ENCODE measurements at regions of chr1 and their contacts with region 1.

Region 1: GRCh38 chr1:111592389-111593361 is 26.9 kb upstream of the RAP1A start:
- DNase-seq: peak; percentile 99
- H3K4me3 Mint-ChIP-seq: peak overlapping the region; percentile 61
- H3K27ac Mint-ChIP-seq: peak overlapping the region; percentile 93
- H3K4me1 Mint-ChIP-seq: peaks cover 74% of the 10 kb centered on the region
- H3K27me3 Mint-ChIP-seq: no peaks in the 10 kb centered on the region

Region 2: GRCh38 chr1:110630839-110631663 is 961.6 kb before region 1 on chr1:
- CTCF ChIA-PET with region 1: no interaction called
- POLR2A ChIA-PET with region 1: no interaction called
- intact Hi-C with region 1: loop called (anchors 10 kb)
- DNase-seq: peak; percentile 92
- H3K4me3 Mint-ChIP-seq: no peak overlapping the region
- H3K27ac Mint-ChIP-seq: no peak overlapping the region
- H3K4me1 Mint-ChIP-seq: peaks cover 66% of the 10 kb centered on the region
- H3K27me3 Mint-ChIP-seq: no peaks in the 10 kb centered on the region

Region 3: GRCh38 chr1:111516005-111516535 is 76.6 kb before region 1 on chr1:
- CTCF ChIA-PET with region 1: interaction called, 9 read pairs
- POLR2A ChIA-PET with region 1: interaction called, 16 read pairs
- intact Hi-C with region 1: loop called (anchors 2 kb)
- DNase-seq: peak; percentile 44
- H3K4me3 Mint-ChIP-seq: peak overlapping the region; percentile 48
- H3K27ac Mint-ChIP-seq: peak overlapping the region; percentile 71
- H3K4me1 Mint-ChIP-seq: peaks cover 35% of the 10 kb centered on the region
- H3K27me3 Mint-ChIP-seq: no peaks in the 10 kb centered on the region

Region 4: DNA sequence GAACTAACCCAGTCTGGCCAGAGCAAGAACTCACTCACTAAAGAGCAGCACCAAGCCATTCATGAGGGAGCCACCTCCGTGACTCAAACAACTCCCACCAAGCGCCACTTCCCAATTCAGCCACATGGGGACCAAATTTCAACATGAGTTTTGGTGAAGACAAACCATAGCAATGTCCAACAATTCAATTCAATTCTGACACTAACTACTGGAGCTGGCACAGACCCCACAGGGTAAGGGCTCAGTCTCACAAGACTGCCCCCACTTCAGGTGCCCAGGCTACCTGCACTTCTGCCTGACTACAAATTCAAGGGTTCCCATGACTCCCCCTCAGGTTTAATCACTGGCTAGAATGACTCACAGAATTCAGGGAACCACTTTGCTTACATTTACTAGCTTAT is 21.9 kb before region 1 on chr1:
- CTCF ChIA-PET with region 1: interaction called, 3 read pairs
- POLR2A ChIA-PET with region 1: no interaction called
- intact Hi-C with region 1: loop called (anchors 2 kb)
- DNase-seq: peak; percentile 62
- H3K4me3 Mint-ChIP-seq: no peak overlapping the region
- H3K27ac Mint-ChIP-seq: peak overlapping the region; percentile 31
- H3K4me1 Mint-ChIP-seq: peaks cover 19% of the 10 kb centered on the region
- H3K27me3 Mint-ChIP-seq: no peaks in the 10 kb centered on the region

Region 5: GRCh38 chr1:111619635-111620440 is 27.2 kb after region 1 on chr1 and contains the start of gene RAP1A:
- CTCF ChIA-PET with region 1: interaction called, 22 read pairs
- POLR2A ChIA-PET with region 1: interaction called, 151 read pairs
- intact Hi-C with region 1: loop called (anchors 1 kb)
- DNase-seq: peak; percentile 97
- H3K4me3 Mint-ChIP-seq: peak within 1 kb of the TSS; percentile 95
- H3K27ac Mint-ChIP-seq: peak within 1 kb of the TSS; percentile 97
- H3K4me1 Mint-ChIP-seq: peaks cover 65% of the 10 kb centered on the region
- H3K27me3 Mint-ChIP-seq: no peaks in the 10 kb centered on the region
- total RNA-seq, gene RAP1A: 292 to 294 TPM